ENCODE measurements at regions of chr11 and their contacts with region 1.

Region 1: GRCh38 chr11:10808553-10809372 is at the start of gene EIF4G2:
- DNase-seq: peak; percentile 99
- ATAC-seq: peak; percentile 96
- H3K4me3 ChIP-seq: peak within 1 kb of the TSS; percentile 83 to 86
- H3K27ac ChIP-seq: peak within 1 kb of the TSS; percentile 96
- H3K4me1 ChIP-seq: peaks cover 35% of the 10 kb centered on the region
- H3K27me3 ChIP-seq: no peaks in the 10 kb centered on the region
- CTCF ChIP-seq: no peak
- total RNA-seq, gene EIF4G2: 2,422 TPM

Region 2: GRCh38 chr11:9972989-9973388 is 835.8 kb before region 1 on chr11:
- CTCF ChIA-PET with region 1: no interaction called
- POLR2A ChIA-PET with region 1: interaction called, 12 read pairs
- in situ Hi-C with region 1: no loop called
- intact Hi-C with region 1: no loop called
- DNase-seq: peak; percentile 53
- ATAC-seq: peak; percentile 72
- H3K4me3 ChIP-seq: no peak overlapping the region
- H3K27ac ChIP-seq: peak overlapping the region; percentile 76
- H3K4me1 ChIP-seq: 0 out of 2 replicates have a peak, but pooled peaks cover 3% of the 10 kb centered on the region
- H3K27me3 ChIP-seq: no peaks in the 10 kb centered on the region
- CTCF ChIP-seq: peak; percentile 85; the same call in 1 of the 2 replicates

Region 3: DNA sequence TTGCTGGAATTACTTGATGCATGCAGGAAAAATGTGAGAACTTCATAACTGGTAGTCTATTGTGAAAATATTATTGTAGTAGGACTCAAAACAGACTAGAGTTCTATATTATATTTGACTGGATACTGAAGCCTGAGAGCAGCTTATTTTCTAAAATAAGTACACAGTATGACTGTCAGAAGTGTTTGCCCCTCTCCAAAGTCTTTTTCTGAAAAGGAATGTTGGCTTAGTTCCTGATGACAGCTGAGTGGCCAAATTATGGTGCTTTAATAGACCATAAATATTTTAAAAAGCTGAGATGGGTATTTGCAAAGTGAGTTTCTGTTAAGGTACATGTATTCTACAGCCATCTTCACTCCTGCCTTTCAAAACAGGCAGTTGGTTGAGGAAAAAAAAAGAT is 36.0 kb after region 1 on chr11:
- CTCF ChIA-PET with region 1: no interaction called
- POLR2A ChIA-PET with region 1: interaction called, 11 read pairs
- in situ Hi-C with region 1: no loop called
- intact Hi-C with region 1: loop called (anchors 5 kb)
- DNase-seq: no peak
- ATAC-seq: no peak
- H3K4me3 ChIP-seq: no peak overlapping the region
- H3K27ac ChIP-seq: no peak overlapping the region
- H3K4me1 ChIP-seq: no peaks in the 10 kb centered on the region
- H3K27me3 ChIP-seq: no peaks in the 10 kb centered on the region
- CTCF ChIP-seq: no peak

Region 4: GRCh38 chr11:10899121-10899830 is 90.5 kb after region 1 on chr11:
- CTCF ChIA-PET with region 1: interaction called, 4 read pairs
- POLR2A ChIA-PET with region 1: interaction called, 12 read pairs
- in situ Hi-C with region 1: no loop called
- intact Hi-C with region 1: no loop called
- DNase-seq: no peak
- ATAC-seq: peak; percentile 75
- H3K4me3 ChIP-seq: peak overlapping the region in 1 of 2 experiments; percentile 17; a peak in 2 of 4 replicates
- H3K27ac ChIP-seq: peak overlapping the region; percentile 90
- H3K4me1 ChIP-seq: peaks cover 35% of the 10 kb centered on the region
- H3K27me3 ChIP-seq: no peaks in the 10 kb centered on the region
- CTCF ChIP-seq: no peak

Region 5: GRCh38 chr11:10925144-10925926 is 116.6 kb after region 1 on chr11:
- CTCF ChIA-PET with region 1: interaction called, 3 read pairs
- POLR2A ChIA-PET with region 1: interaction called, 17 read pairs
- in situ Hi-C with region 1: no loop called
- intact Hi-C with region 1: loop called (anchors 5 kb)
- DNase-seq: no peak
- ATAC-seq: peak; percentile 81
- H3K4me3 ChIP-seq: no peak overlapping the region
- H3K27ac ChIP-seq: peak overlapping the region; percentile 98
- H3K4me1 ChIP-seq: peaks cover 59% of the 10 kb centered on the region
- H3K27me3 ChIP-seq: no peaks in the 10 kb centered on the region
- CTCF ChIP-seq: no peak